OCI-LY7 (cell line): ENCODE measurements at regions of chr21 and their contacts with region 1.

Region 1: DNA sequence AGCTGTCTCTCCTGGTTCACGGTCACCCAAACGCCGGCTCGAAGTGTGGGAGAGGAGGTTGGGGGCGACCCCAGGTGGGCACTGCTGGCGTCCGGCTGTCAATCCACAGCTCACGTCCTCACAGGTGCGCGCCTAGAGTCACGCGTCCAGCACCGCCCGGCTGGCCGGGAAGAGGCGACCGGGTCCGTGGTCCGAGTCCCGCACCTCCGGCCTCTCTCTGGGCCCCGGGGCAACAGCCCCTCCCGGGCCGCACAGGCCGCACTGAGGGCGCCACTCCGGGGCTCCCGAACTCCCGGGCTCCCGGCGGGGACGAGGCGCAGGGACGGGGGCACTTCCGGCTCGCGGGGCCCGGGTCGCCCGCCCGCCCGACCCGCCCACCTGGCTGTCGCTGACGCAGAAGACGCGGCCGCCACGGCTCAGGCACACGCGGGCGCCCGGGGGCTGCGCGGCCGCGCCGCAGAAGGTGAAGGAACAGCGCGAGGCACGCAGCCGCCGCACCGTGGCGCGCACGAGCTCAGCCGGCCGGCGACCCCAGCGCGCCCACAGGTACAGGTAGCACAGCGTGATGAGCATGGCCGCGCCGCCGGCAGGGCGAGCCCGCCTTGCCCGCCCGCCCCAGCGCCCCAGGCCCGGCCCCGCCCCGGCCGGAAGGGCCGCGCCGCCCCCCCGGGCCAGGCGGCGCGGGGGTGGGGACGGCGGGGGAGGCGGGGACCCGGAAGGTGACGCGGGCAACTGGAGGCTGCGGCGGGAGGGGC is at the start of gene HLCS:
- DNase-seq: peak; percentile 87
- H3K4me3 ChIP-seq: peak within 1 kb of the TSS; percentile 92
- H3K27ac ChIP-seq: peak within 1 kb of the TSS; percentile 45
- H3K4me1 ChIP-seq: peaks cover 24% of the 10 kb centered on the region
- CTCF ChIP-seq: no peak
- total RNA-seq, gene HLCS: 12.0 and 13.7 TPM in 2 replicates

Region 2: DNA sequence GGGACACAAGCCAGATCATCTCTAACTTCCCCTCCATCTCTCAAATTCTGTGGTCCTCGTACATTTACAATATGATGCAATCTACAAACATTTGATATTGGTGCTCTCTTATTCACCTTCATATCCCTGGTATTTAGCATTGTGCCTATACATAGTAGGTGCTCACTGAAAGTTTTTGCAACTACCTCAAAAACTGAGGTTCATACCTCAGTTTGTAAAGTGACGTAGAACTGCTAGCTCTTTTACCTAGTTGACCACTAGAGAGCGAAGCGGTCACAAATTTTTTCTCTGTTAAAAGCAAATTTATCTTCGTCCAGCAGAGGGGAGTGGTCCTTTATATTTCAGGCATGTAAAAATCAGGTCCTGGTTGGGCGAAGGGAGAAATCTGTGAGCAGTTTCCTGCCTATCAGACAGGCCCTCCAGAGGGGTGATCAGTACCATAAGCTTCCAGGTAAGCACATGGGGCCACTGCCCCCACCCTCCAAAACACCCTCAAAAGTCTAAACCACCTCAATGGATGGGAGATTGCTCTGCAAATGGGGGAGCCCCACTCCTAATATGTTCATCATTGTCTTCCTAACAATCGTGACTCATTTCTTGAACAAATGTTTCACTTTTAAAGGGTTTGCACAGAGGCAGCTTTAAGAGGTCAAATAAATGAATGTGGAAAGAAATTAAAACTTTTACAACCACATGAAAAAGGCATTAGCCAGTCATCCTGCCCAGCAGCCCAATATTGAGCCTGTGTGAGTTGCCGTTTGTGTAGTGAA is 10.8 kb after region 1 on chr21:
- CTCF ChIA-PET with region 1: no interaction called
- POLR2A ChIA-PET with region 1: interaction called, 14 read pairs
- intact Hi-C with region 1: no loop called
- DNase-seq: peak; percentile 87
- H3K4me3 ChIP-seq: peak overlapping the region; percentile 10
- H3K27ac ChIP-seq: no peak overlapping the region
- H3K4me1 ChIP-seq: peaks cover 8% of the 10 kb centered on the region
- CTCF ChIP-seq: peak; percentile 97

Region 3: DNA sequence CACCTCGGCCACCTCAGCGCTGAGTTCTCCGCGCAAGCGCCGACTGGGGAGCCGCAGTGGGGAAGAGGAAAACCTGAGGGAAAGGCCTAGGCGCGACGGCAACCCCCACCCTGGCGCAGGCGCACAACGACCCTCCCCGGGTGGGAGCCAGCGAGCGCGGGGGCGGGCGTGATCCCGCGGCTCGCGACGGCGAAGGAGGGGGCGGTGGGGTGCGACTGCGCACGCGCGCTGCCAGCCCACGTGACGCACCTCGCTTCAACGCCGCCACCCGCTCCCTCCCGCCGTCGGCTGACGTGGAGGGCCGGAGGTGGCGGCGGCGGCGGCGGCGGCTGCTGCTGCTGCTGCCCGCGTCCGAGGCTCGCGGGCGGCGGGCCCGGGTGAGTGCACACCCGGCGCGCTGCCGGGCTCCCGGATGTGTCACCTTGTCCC is 106.8 kb after region 1 on chr21 and contains the starts of genes PIGP and TTC3:
- CTCF ChIA-PET with region 1: no interaction called
- POLR2A ChIA-PET with region 1: interaction called, 3 read pairs
- intact Hi-C with region 1: loop called (anchors 2 kb)
- DNase-seq: peak; percentile 93
- H3K4me3 ChIP-seq: peak within 1 kb of the TSS; percentile 80
- H3K27ac ChIP-seq: peak within 1 kb of the TSS; percentile 55
- H3K4me1 ChIP-seq: peaks cover 32% of the 10 kb centered on the region
- CTCF ChIP-seq: no peak
- total RNA-seq, gene PIGP: 3.7 and 7.4 TPM in 2 replicates
- total RNA-seq, gene TTC3: 73.5 and 92.1 TPM in 2 replicates

Region 4: GRCh38 chr21:37445228-37445627 is 479.0 kb after region 1 on chr21:
- CTCF ChIA-PET with region 1: no interaction called
- POLR2A ChIA-PET with region 1: no interaction called
- intact Hi-C with region 1: no loop called
- DNase-seq: no peak
- H3K4me3 ChIP-seq: no peak overlapping the region
- H3K27ac ChIP-seq: no peak overlapping the region
- H3K4me1 ChIP-seq: no peaks in the 10 kb centered on the region
- CTCF ChIP-seq: no peak